ENCODE measurements at regions of chr11 and their contacts with region 1.

Region 1: DNA sequence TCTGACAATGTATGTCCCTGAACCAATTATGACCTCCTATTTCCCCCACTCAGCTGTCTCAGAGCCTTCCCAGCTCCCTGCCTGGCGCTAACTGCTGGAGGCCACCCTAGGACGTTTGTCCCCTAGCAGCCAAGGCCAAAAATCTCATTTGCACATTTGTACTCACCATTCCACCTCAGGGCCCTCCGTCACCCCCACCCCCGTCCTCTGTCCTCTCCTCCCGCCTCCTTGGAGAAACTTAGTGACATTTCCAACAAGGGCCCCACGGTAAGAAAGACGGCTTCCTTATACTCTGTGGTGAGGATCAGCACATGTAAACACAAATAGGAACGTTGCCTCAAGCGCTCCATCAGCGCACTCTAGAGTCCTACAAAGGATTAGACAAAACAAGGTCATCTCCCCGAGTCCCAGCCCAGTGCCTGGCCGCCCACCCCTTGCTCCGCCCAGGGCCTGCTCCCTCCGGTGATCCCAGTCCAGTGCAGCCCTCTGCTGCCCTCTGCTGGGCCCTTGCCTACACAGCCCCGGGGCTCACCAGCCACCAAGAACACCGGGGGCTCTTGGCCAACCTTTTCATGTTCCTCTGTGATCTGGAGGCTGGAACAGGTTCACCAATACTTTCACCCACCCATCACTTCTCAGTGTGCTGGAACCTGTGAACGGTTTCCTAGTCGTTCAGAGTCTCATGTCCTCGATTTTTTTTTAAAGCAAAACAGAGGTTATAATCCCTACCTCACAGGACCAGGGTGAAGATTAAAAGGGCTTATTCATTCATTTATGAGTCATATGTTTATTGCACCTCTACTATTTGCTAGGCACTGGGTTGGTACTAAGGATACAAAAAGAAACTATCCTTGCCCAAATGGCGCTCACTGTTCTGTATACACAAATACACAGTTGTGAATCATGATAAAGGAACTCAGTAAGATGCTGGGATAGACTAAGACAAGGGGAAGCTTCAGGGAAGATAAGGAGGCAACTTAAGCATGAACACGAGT is 15.3 kb upstream of the CTR9 start:
- DNase-seq: peak; percentile 95
- ATAC-seq: peak; percentile 99
- H3K4me3 Mint-ChIP-seq: peak overlapping the region; percentile 11
- H3K27ac Mint-ChIP-seq: peak overlapping the region; percentile 2
- H3K4me1 Mint-ChIP-seq: peaks cover 10% of the 10 kb centered on the region
- H3K27me3 Mint-ChIP-seq: no peaks in the 10 kb centered on the region

Region 2: DNA sequence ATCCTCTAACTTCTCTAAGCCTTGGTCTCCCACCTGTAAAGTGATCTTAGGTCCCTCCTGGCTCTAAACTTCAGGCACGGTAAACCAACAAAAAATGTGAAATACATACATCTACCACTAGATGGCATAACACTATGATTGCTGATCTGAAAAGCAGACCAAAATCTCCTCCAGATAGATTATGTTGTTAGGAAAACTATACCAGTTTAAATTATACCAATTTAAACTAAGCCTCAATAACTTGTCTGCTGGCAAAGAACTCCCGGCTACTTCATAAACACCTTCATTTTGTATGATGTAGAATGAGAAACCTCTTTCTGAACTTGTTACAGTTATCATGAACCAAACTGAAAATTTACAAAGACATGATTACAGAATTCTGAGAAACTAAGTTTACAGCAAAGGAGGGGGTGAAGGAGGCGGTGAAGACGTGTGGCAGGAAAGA is 527.6 kb before region 1 on chr11:
- CTCF ChIA-PET with region 1: no interaction called
- POLR2A ChIA-PET with region 1: no interaction called
- intact Hi-C with region 1: loop called in 1 of 2 experiments (anchors 5 kb)
- DNase-seq: peak; percentile 11
- ATAC-seq: peak; percentile 74
- H3K4me3 Mint-ChIP-seq: no peak overlapping the region
- H3K27ac Mint-ChIP-seq: no peak overlapping the region
- H3K4me1 Mint-ChIP-seq: no peaks in the 10 kb centered on the region
- H3K27me3 Mint-ChIP-seq: peaks cover 3% of the 10 kb centered on the region

Region 3: DNA sequence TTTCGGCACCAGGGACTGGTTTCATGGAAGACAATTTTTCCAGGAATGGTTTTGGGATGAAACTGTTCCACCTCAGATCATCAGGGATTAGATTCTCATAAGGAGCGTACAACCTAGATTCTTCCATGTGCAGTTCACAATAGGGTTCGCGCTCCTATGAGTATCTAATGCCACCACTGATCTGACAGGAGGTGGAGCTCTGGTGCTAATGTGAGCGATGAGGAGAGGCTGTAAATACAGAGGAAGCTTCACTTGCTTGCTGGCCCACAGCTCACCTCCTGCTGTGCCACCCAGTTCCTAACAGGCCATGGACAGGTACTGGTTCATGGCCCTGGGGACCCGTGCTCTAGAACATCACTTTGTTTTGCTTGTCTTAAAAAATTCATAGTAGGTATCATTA is 322.5 kb before region 1 on chr11:
- CTCF ChIA-PET with region 1: interaction called, 7 read pairs
- POLR2A ChIA-PET with region 1: no interaction called
- intact Hi-C with region 1: loop called (anchors 1 kb)
- DNase-seq: peak; percentile 70
- ATAC-seq: peak; percentile 94
- H3K4me3 Mint-ChIP-seq: no peak overlapping the region
- H3K27ac Mint-ChIP-seq: no peak overlapping the region
- H3K4me1 Mint-ChIP-seq: peaks cover 32% of the 10 kb centered on the region
- H3K27me3 Mint-ChIP-seq: no peaks in the 10 kb centered on the region

Region 4: DNA sequence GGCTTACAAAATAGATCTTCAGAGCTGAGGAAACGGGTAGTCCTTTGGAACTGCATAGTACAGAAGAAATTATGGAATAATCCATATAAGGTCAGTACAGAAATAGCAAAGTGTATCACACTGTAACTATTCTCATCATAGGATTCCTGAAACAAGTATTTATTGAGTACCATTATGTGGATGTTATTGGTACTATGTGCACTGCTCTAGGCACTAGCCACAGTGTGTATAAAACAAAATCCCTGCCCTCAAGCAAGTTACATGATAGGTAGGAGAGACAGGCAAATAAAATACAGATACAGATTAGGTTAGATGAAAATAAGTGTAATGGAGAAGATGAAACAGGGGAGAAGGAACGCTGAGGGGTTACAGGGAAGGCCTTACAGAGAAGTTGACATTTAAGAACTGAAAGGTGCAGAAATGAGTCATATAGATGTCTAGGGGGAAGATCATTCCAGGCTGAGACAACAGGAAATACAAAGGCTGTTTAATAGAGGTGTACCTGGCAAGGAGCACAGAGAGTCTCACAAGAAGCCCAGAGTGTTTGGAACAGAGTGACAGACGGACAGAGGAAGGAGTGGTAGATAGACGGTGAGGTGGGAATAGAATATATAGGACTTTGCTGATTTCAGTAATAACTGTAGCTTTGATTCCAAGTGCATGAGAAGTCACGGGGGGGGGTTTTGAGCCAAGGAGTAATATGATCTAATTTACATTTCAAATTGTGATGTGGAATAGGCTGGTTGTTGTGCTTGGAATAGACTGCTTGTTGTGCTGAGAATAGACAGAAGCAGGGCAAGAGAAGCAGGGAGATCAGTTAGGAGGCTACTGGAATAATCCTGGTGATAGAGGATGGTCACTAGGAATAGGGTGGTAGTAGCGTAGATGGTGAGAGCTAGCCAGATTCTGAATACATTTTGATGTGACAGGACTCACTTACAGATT is 208.5 kb before region 1 on chr11:
- CTCF ChIA-PET with region 1: no interaction called
- POLR2A ChIA-PET with region 1: no interaction called
- intact Hi-C with region 1: loop called in 1 of 2 experiments (anchors 5 kb)
- DNase-seq: no peak
- ATAC-seq: peak; percentile 96
- H3K4me3 Mint-ChIP-seq: peak overlapping the region; percentile 9
- H3K27ac Mint-ChIP-seq: peak overlapping the region; percentile 83
- H3K4me1 Mint-ChIP-seq: peaks cover 22% of the 10 kb centered on the region
- H3K27me3 Mint-ChIP-seq: no peaks in the 10 kb centered on the region

Region 5: GRCh38 chr11:10653926-10654810 is 81.6 kb before region 1 on chr11:
- CTCF ChIA-PET with region 1: interaction called, 4 read pairs
- POLR2A ChIA-PET with region 1: no interaction called
- intact Hi-C with region 1: loop called (anchors 1 to 2 kb)
- DNase-seq: peak; percentile 53
- ATAC-seq: peak; percentile 80
- H3K4me3 Mint-ChIP-seq: no peak overlapping the region
- H3K27ac Mint-ChIP-seq: no peak overlapping the region
- H3K4me1 Mint-ChIP-seq: peaks cover 20% of the 10 kb centered on the region
- H3K27me3 Mint-ChIP-seq: no peaks in the 10 kb centered on the region

Region 6: GRCh38 chr11:10762185-10762584 is 26.4 kb after region 1 on chr11:
- CTCF ChIA-PET with region 1: no interaction called
- POLR2A ChIA-PET with region 1: no interaction called
- intact Hi-C with region 1: no loop called
- DNase-seq: no peak
- ATAC-seq: no peak
- H3K4me3 Mint-ChIP-seq: no peak overlapping the region
- H3K27ac Mint-ChIP-seq: no peak overlapping the region
- H3K4me1 Mint-ChIP-seq: no peaks in the 10 kb centered on the region
- H3K27me3 Mint-ChIP-seq: no peaks in the 10 kb centered on the region

Region 7: DNA sequence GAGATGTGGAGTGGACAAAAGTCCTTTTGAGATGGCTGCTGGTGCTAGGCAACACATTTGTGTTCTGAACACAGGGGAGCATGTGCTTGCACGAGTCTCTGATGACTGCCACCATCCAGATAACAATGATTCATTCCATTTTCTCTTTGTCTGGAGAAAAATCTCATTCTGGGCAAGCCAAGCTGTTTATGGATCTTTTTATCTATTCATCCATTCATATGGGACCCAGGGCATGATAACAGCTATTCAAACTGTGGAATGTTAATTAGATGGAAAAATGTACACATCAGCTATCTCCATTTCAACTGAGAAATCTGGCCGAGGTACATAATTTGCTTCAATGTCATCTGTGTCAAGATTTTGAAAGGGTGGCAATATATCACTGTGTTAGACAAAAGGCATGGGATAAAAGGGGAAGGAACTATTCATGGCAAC is 239.5 kb after region 1 on chr11:
- CTCF ChIA-PET with region 1: no interaction called
- POLR2A ChIA-PET with region 1: no interaction called
- intact Hi-C with region 1: no loop called
- DNase-seq: no peak
- ATAC-seq: no peak
- H3K4me3 Mint-ChIP-seq: no peak overlapping the region
- H3K27ac Mint-ChIP-seq: no peak overlapping the region
- H3K4me1 Mint-ChIP-seq: no peaks in the 10 kb centered on the region
- H3K27me3 Mint-ChIP-seq: no peaks in the 10 kb centered on the region